AG04450 (cell line): ENCODE measurements at regions of chr5 and their contacts with region 1.

Region 1: GRCh38 chr5:149381987-149382340 is 2.9 kb upstream of the IL17B start:
- DNase-seq: no peak
- H3K4me3 ChIP-seq: no peak overlapping the region
- H3K27ac ChIP-seq: no peak overlapping the region
- H3K27me3 ChIP-seq: no peaks in the 10 kb centered on the region
- CTCF ChIP-seq: peak; percentile 96

Region 2: GRCh38 chr5:149205625-149206523 is 176.1 kb before region 1 on chr5:
- CTCF ChIA-PET with region 1: no interaction called
- POLR2A ChIA-PET with region 1: no interaction called
- DNase-seq: peak; percentile 72
- H3K4me3 ChIP-seq: no peak overlapping the region
- H3K27ac ChIP-seq: peak overlapping the region; percentile 95
- H3K27me3 ChIP-seq: no peaks in the 10 kb centered on the region
- CTCF ChIP-seq: no peak

Region 3: GRCh38 chr5:149400304-149400703 is 18.3 kb after region 1 on chr5:
- CTCF ChIA-PET with region 1: interaction called, 14 read pairs
- POLR2A ChIA-PET with region 1: interaction called, 42 read pairs
- DNase-seq: no peak
- H3K4me3 ChIP-seq: no peak overlapping the region
- H3K27ac ChIP-seq: no peak overlapping the region
- H3K27me3 ChIP-seq: no peaks in the 10 kb centered on the region
- CTCF ChIP-seq: no peak

Region 4: GRCh38 chr5:149406203-149406978 is 24.4 kb after region 1 on chr5:
- CTCF ChIA-PET with region 1: interaction called, 16 read pairs
- POLR2A ChIA-PET with region 1: interaction called, 42 read pairs
- DNase-seq: peak; percentile 88
- H3K4me3 ChIP-seq: peak overlapping the region; percentile 75
- H3K27ac ChIP-seq: peak overlapping the region; percentile 95
- H3K27me3 ChIP-seq: no peaks in the 10 kb centered on the region
- CTCF ChIP-seq: peak; percentile 34

Region 5: DNA sequence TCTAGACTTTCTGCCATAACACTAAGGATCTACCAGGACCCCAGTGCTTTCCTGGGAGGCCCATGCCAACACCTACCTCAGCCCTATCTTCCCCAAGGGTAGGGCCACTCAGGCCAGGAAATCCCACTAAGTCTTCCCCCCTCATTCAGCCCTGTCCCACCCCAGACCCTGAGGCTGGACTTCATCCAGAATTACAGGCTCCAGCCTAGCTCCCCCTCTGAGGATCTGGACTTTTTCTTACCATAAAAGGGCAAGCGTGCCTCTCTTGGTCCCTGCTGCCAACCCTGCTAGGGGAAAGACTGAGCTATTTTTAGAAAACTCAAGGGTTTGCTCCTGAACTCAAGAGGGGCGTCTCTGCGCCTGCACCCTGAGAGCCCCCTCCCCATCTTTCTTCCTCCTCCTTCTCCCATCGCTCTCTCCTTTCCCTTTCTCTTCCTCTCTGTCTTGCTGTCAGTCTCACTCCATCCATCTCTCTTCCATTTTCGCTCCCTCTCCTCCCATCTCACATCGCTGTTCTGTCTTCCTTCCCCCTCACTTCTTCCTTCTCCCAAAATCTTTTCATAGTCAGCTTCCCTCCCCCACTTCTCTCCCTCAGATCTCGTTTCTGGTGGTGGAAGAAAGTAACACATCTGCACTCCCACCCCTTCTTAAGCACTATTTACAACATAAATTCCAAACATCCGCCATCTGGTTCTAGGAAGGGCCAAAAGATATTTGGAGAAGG is 35.2 kb after region 1 on chr5:
- CTCF ChIA-PET with region 1: interaction called, 25 read pairs
- POLR2A ChIA-PET with region 1: interaction called, 5 read pairs
- DNase-seq: peak; percentile 89
- H3K4me3 ChIP-seq: peak overlapping the region; percentile 25
- H3K27ac ChIP-seq: peak overlapping the region; percentile 98
- H3K27me3 ChIP-seq: no peaks in the 10 kb centered on the region
- CTCF ChIP-seq: no peak

Region 6: GRCh38 chr5:149422366-149423048 is 40.5 kb after region 1 on chr5:
- CTCF ChIA-PET with region 1: interaction called, 25 read pairs
- POLR2A ChIA-PET with region 1: interaction called, 4 read pairs
- DNase-seq: peak; percentile 95
- H3K4me3 ChIP-seq: peak overlapping the region; percentile 11
- H3K27ac ChIP-seq: peak overlapping the region; percentile 95
- H3K27me3 ChIP-seq: no peaks in the 10 kb centered on the region
- CTCF ChIP-seq: no peak

Region 7: GRCh38 chr5:149442563-149443182 is 60.7 kb after region 1 on chr5:
- CTCF ChIA-PET with region 1: interaction called, 16 read pairs
- POLR2A ChIA-PET with region 1: interaction called, 4 read pairs
- DNase-seq: peak; percentile 44
- H3K4me3 ChIP-seq: no peak overlapping the region
- H3K27ac ChIP-seq: peak overlapping the region; percentile 0
- H3K27me3 ChIP-seq: peaks cover 2% of the 10 kb centered on the region
- CTCF ChIP-seq: peak; percentile 93

Region 8: GRCh38 chr5:149567226-149567625 is 185.3 kb after region 1 on chr5:
- CTCF ChIA-PET with region 1: interaction called, 18 read pairs
- POLR2A ChIA-PET with region 1: no interaction called
- DNase-seq: no peak
- H3K4me3 ChIP-seq: no peak overlapping the region
- H3K27ac ChIP-seq: no peak overlapping the region
- H3K27me3 ChIP-seq: no peaks in the 10 kb centered on the region
- CTCF ChIP-seq: no peak